Calu3 (cell line): ENCODE measurements at regions of chr11 and their contacts with region 1.

Region 1: GRCh38 chr11:101949846-101950245 is 33.5 kb upstream of the ANGPTL5 start:
- DNase-seq: no peak
- H3K4me3 Mint-ChIP-seq: no peak overlapping the region
- H3K27ac Mint-ChIP-seq: no peak overlapping the region
- H3K4me1 Mint-ChIP-seq: no peaks in the 10 kb centered on the region
- H3K27me3 Mint-ChIP-seq: no peaks in the 10 kb centered on the region
- CTCF ChIP-seq: no peak

Region 2: DNA sequence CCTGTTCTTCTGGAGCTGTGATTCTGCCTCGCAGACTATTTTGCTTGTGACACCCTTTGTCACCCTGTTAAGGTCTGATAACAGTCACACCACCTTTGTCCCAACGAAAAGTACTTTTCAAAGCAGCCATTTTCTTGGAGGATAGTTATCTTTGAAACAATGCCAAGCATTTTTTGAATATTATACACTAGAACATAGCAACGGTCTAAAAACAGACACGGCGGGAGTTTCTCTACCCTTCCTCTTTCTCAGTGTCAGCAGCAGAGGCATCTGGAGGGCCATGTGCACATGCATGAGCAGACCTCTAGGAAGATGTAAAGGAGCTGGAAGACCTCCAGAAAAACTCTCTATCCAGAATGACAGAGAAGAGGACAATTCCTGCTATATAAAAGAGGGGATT is 452.6 kb before region 1 on chr11:
- CTCF ChIA-PET with region 1: interaction called, 12 read pairs
- intact Hi-C with region 1: no loop called
- DNase-seq: no peak
- H3K4me3 Mint-ChIP-seq: no peak overlapping the region
- H3K27ac Mint-ChIP-seq: no peak overlapping the region
- H3K4me1 Mint-ChIP-seq: no peaks in the 10 kb centered on the region
- H3K27me3 Mint-ChIP-seq: no peaks in the 10 kb centered on the region
- CTCF ChIP-seq: no peak